IMR-90 (cell line): ENCODE measurements at regions of chr2 and their contacts with region 1.

Region 1: GRCh38 chr2:106104332-106105062 is 89.6 kb downstream of the UXS1 start:
- DNase-seq: peak; percentile 66
- ATAC-seq: peak; percentile 86
- H3K4me3 ChIP-seq: no peak overlapping the region
- H3K27ac ChIP-seq: no peak overlapping the region
- H3K4me1 ChIP-seq: no peaks in the 10 kb centered on the region
- H3K27me3 ChIP-seq: no peaks in the 10 kb centered on the region
- CTCF ChIP-seq: peak; percentile 94
- POLR2A ChIP-seq: 0 out of 2 replicates have a peak, but pooled peaks have one; percentile 49
- RAD21 ChIP-seq: peak; percentile 97

Region 2: DNA sequence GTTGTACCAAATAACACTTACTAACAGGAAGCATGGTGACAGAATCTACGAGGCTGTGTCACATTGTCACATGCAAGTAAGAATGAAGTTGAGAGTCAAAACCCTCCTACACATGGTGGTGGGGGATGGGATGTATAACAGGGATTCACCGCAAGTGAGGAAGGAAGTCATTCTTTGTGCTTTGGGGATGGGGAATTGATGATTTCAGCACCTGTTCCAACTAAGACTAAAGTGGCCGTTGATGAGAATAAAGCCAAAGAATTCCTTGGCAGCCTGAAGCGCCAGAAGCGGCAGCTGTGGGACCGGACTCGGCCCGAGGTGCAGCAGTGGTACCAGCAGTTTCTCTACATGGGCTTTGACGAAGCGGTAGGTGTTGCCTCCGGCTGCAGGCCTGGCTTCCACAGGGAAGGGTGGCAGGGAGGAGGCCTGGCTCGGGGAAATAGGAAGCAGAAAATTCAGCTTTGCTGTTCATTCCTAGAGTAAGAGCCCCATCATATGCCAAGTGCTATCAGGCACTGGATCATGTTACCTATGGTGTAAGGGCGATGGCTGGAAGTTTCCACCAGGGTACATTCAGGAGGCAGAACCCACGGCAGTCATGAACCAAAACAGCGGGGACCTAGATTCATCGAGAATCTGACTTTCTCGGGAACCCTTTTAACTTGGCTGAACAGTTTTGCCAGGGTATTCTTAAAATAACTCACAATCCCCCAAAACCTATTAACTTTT is 30.7 kb before region 1 on chr2:
- CTCF ChIA-PET with region 1: no interaction called
- POLR2A ChIA-PET with region 1: no interaction called
- dilution Hi-C with region 1: no loop called
- in situ Hi-C with region 1: no loop called
- intact Hi-C with region 1: no loop called
- DNase-seq: no peak
- ATAC-seq: no peak
- H3K4me3 ChIP-seq: no peak overlapping the region
- H3K27ac ChIP-seq: no peak overlapping the region
- H3K4me1 ChIP-seq: no peaks in the 10 kb centered on the region
- H3K27me3 ChIP-seq: peaks cover 25% of the 10 kb centered on the region
- CTCF ChIP-seq: no peak
- POLR2A ChIP-seq: no peak
- RAD21 ChIP-seq: no peak

Region 3: GRCh38 chr2:106582148-106583143 is 477.9 kb after region 1 on chr2:
- CTCF ChIA-PET with region 1: interaction called, 3 read pairs
- POLR2A ChIA-PET with region 1: no interaction called
- dilution Hi-C with region 1: no loop called
- in situ Hi-C with region 1: no loop called
- intact Hi-C with region 1: loop called (anchors 1 kb)
- DNase-seq: peak; percentile 69
- ATAC-seq: peak; percentile 97
- H3K4me3 ChIP-seq: no peak overlapping the region
- H3K27ac ChIP-seq: no peak overlapping the region
- H3K4me1 ChIP-seq: no peaks in the 10 kb centered on the region
- H3K27me3 ChIP-seq: peaks cover 4% of the 10 kb centered on the region; the same call in 1 of the 2 replicates
- CTCF ChIP-seq: peak; percentile 93
- POLR2A ChIP-seq: no peak
- RAD21 ChIP-seq: peak; percentile 81